ENCODE measurements at regions of chr1 and their contacts with region 1.

Region 1: DNA sequence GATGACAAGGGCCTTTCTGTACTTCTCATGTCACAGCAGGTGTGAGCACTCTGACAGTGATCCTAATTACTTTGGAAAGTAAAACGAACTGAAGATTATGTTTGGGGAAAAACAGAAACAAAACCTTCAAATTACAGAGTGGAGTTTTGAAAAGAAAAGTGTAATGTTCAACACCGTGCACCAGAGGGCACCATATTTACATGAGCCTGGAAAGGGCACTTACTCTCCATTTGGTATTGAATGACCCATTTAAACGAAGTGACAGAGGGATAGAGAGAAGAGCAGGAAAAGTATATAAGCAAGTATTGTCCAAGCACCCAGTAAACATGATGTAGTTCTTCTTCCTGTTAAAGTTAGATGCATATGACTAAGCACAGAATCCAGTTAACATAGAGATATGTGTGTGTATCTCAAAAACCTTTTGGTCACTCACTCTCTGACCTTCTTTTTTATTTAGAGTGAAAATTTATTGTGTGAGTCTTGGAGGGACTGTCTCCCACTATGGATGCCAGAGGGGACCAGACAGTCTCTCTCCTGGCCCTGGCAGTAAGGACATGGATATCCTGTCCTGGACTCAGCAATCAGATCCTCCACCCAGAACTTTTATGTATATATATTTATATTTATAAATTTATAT is 3.8 kb upstream of the RGSL1 start:
- DNase-seq: no peak
- ATAC-seq: peak in 1 of 4 donors; percentile 65
- H3K4me3 ChIP-seq: no peak overlapping the region
- H3K27ac ChIP-seq: no peak overlapping the region
- H3K4me1 ChIP-seq: peaks cover 0 to 6% (median 0%) of the 10 kb centered on the region in 12 donors
- H3K27me3 ChIP-seq: no peaks in the 10 kb centered on the region
- CTCF ChIP-seq: peak; percentile 46 to 72 (median 58)
- POLR2A ChIP-seq: no peak

Region 2: DNA sequence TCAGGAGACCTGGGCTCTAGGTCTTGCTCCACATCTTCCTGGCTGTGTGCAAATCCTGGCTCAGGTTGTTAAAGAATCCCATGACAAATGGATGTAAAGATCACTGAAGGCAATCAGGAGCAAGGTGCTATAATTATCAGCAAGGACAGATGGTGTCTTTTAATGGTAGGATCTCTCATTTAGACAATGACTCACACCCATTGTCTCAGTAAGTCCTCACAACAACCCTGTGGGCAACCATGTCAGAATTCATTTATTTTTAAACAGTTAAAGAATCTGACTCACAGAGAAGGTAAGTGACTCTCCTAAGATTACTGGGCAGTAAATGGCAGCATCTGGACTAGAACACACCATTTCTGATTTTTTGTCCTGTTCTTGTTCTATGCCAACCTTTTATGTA is 110.1 kb after region 1 on chr1:
- intact Hi-C with region 1: no loop called
- DNase-seq: no peak
- ATAC-seq: no peak
- H3K4me3 ChIP-seq: no peak overlapping the region
- H3K27ac ChIP-seq: no peak overlapping the region
- H3K4me1 ChIP-seq: no peaks in the 10 kb centered on the region
- H3K27me3 ChIP-seq: no peaks in the 10 kb centered on the region
- CTCF ChIP-seq: no peak
- POLR2A ChIP-seq: no peak

Region 3: DNA sequence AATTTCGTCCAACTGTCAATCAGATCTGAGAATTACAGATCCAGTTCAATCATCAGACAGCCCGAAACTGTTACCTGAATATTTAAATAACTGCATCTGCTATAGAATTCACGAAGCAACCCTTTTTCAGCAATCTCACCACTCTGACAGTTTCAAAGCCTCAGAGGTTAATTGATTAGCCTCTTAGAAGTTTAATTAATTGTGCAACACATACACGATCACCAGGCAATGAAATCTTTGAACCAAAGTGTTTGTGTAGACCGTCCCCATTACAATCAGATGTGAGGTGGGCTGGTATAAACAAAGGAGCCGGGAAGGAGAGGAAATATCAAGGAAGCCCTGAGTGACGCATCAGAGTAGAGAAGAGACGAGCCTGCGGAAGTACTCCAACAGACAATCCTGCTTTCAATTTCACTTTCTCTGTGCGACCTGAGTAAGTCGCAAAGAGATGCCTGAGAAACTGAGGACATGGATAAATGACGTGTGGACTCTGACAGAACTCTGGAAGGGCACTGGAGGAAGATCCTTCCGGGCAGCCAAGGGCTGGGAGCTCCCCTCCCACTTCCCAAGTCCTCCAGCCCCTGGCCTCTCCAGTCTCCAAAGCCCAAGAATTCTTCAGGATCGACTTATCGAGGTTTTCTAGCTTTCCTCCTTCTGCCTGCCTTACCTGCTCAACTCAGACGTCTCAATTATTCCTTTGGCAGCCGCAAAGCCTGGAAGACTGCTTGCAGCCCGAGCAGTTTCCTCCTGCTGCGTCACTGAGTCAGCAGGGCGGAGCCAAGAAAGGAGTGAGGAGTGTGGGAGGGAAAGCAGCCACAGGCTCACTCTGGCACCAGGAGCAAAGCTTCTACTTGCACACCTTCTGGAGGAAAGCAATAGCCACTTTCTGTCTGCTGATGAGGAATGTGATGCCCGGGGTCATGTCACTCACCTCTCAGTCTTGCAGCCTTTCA is 142.6 kb after region 1 on chr1 and contains the start of gene RNASEL:
- intact Hi-C with region 1: loop called in 6 of 10 experiments (anchors 10 kb)
- DNase-seq: peak; percentile 70 to 82 (median 76)
- ATAC-seq: peak; percentile 82 to 94 (median 92)
- H3K4me3 ChIP-seq: peak within 1 kb of the TSS; percentile 49 to 90 (median 74)
- H3K27ac ChIP-seq: peak within 1 kb of the TSS; percentile 51 to 99 (median 92)
- H3K4me1 ChIP-seq: peaks cover 0 to 40% (median 6%) of the 10 kb centered on the region in 12 donors
- H3K27me3 ChIP-seq: no peaks in the 10 kb centered on the region
- CTCF ChIP-seq: no peak
- POLR2A ChIP-seq: peak in 1 of 2 donors; percentile 33
- total RNA-seq, gene RNASEL: 2.0 to 6.3 (median 3.0) TPM

Region 4: GRCh38 chr1:182595641-182596240 is 149.6 kb after region 1 on chr1:
- intact Hi-C with region 1: loop called in 5 of 10 experiments (anchors 5 to 10 kb)
- DNase-seq: peak; percentile 56 to 75 (median 68)
- ATAC-seq: peak in 3 of 4 donors; percentile 74 to 84 (median 76)
- H3K4me3 ChIP-seq: no peak overlapping the region
- H3K27ac ChIP-seq: no peak overlapping the region
- H3K4me1 ChIP-seq: peaks cover 0 to 42% (median 3%) of the 10 kb centered on the region in 12 donors
- H3K27me3 ChIP-seq: no peaks in the 10 kb centered on the region
- CTCF ChIP-seq: peak; percentile 81 to 93 (median 90)
- POLR2A ChIP-seq: no peak

Region 5: GRCh38 chr1:182781841-182782586 is 335.9 kb after region 1 on chr1:
- intact Hi-C with region 1: loop called (anchors 5 kb)
- DNase-seq: peak; percentile 69 to 83 (median 78)
- ATAC-seq: peak in 3 of 4 donors; percentile 80 to 87 (median 82)
- H3K4me3 ChIP-seq: no peak overlapping the region
- H3K27ac ChIP-seq: no peak overlapping the region
- H3K4me1 ChIP-seq: peaks cover 0 to 13% (median under 1%) of the 10 kb centered on the region in 12 donors
- H3K27me3 ChIP-seq: no peaks in the 10 kb centered on the region
- CTCF ChIP-seq: peak; percentile 64 to 85 (median 79)
- POLR2A ChIP-seq: no peak

Region 6: GRCh38 chr1:182789138-182790076 is 343.3 kb after region 1 on chr1 and contains the start of gene NPL:
- intact Hi-C with region 1: loop called (anchors 5 kb)
- DNase-seq: peak; percentile 86 to 94 (median 87)
- ATAC-seq: peak; percentile 82 to 98 (median 98)
- H3K4me3 ChIP-seq: peak within 1 kb of the TSS; percentile 41 to 79 (median 64)
- H3K27ac ChIP-seq: peak within 1 kb of the TSS in 11 of 12 donors; percentile 8 to 88 (median 68)
- H3K4me1 ChIP-seq: peaks cover 0 to 42% (median 7%) of the 10 kb centered on the region in 12 donors
- H3K27me3 ChIP-seq: no peaks in the 10 kb centered on the region
- CTCF ChIP-seq: peak in 1 of 12 donors; percentile 7
- POLR2A ChIP-seq: peak in 1 of 2 donors; percentile 90
- total RNA-seq, gene NPL: 1.4 to 62.7 (median 3.0) TPM